CD8-positive, alpha-beta memory T cell (primary cell): ENCODE measurements at regions of chr12 and their contacts with region 1.

Region 1: DNA sequence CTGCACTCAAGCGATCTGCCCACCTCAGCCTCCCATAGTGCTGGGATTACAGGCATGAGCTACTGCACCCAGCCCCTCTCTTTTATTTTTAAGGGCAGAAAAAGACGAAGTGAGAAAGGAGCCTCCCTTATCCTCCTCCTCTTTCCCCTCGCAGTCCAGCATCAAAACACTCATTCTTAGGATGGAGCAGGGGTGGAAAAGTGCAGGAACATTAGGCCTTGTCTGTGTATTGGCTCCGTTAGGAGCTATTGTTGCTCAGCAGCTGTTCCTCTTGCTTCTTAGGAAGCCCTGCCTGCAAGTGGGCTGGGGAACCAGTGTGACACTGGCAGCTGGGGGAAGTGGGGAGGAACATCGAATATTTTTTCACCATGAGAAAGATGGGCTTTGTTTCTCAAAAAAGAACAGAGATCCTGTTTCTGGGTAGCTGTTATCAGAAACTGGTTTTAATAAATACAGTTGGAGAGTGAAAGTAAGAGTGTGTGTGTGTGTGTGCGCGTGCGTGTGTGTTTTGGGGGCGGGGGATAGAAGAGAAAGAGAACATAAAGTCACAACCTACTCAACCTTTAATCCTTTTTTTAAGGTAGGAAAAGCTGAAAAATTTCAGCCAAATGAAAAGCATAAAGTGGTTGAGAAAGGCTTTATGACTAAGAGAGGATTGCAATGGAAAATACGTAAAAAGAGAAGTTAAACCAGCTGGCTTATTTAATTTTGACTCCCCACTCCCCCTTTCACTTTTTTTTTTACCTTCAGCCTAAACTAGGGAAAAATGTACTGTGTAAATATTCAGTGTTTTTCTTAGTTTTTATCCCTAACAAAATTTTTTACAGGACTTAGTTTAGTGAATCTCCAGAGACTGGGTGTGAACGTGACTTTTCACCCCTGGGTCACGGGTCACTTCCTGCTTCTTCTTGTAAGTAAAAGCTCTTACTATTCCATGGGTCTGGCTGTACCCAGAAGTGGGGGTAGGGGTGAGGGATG is 197.2 kb upstream of the PLEKHG7 start:
- DNase-seq: peak; percentile 1 to 65 (median 35)
- H3K4me3 ChIP-seq: peak overlapping the region; percentile 54
- H3K4me3 Mint-ChIP-seq: peak overlapping the region; percentile 78 to 93 (median 86)
- H3K27ac ChIP-seq: no peak overlapping the region
- H3K27ac Mint-ChIP-seq: peak overlapping the region; percentile 78 to 98 (median 96)
- H3K4me1 ChIP-seq: peaks cover 27% of the 10 kb centered on the region
- H3K4me1 Mint-ChIP-seq: peaks cover 31 to 44% (median 38%) of the 10 kb centered on the region in 3 donors
- H3K27me3 ChIP-seq: no peaks in the 10 kb centered on the region
- H3K27me3 Mint-ChIP-seq: no peaks in the 10 kb centered on the region

Region 2: DNA sequence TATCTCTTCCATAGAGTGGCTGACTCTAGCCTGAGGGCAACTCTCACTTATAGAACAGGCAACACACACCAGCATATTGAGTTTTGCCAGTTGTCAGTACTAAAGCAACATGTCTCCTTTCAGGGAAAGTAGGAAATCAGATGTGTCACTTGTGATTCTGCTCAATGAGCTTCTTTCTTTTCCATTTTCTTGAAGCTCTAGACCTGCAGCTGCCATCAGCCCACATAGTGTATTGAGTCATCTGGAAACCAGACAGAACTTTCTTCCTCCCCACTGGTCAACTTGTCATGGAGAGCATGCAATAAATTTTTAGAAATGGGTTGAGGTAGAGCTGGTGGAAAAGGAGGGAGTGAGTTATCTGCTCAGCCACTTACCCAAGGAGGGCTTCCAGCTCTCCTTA is 11.7 kb before region 1 on chr12:
- CTCF ChIA-PET with region 1: interaction called, 30 read pairs
- POLR2A ChIA-PET with region 1: interaction called, 5 read pairs
- DNase-seq: no peak
- H3K4me3 ChIP-seq: no peak overlapping the region
- H3K4me3 Mint-ChIP-seq: no peak overlapping the region
- H3K27ac ChIP-seq: no peak overlapping the region
- H3K27ac Mint-ChIP-seq: no peak overlapping the region
- H3K4me1 ChIP-seq: no peaks in the 10 kb centered on the region
- H3K4me1 Mint-ChIP-seq: peaks cover 0 to 4% (median 2%) of the 10 kb centered on the region in 3 donors
- H3K27me3 ChIP-seq: no peaks in the 10 kb centered on the region
- H3K27me3 Mint-ChIP-seq: no peaks in the 10 kb centered on the region